ENCODE measurements at regions of chr5 and their contacts with region 1.

Region 1: DNA sequence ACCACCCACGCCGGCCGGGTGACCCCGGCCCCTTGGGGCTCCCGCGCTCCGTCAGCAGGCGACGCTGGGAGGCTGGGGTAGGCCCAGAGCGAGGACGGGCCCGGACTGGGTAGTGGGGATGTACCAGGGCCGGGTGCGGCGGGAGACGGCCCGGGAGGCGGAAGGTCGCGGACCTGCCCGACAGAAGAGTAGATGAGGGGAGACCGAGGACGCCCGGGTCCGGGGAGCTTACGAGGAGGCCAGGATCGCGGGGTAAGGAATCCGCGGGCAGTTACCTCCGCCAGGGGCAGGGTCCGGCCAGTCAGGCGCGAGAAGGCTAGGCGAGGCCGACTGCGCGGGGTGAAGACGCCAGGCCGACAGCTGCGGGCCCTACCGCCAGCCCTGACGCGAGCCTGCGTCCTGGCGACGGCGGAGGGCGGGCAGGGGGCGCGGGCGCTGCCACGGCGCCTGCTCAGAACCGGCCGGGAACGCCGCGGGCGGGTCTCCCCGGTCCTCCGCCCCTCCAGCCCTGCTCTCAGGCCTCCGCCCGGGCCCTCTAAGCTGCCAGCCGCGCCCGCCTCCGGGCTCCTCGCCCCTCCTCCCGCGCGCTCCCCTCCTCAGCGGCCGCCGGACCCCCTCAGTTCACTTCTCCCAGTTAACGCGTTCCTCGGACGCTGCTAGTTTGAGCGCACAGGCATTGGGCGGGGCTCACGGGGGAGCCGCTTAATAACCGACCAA is at the start of gene CPLANE1:
- DNase-seq: peak; percentile 89
- total RNA-seq, gene CPLANE1: 9.9 TPM

Region 2: GRCh38 chr5:37370864-37371726 is 122.0 kb after region 1 on chr5 and contains the start of gene NUP155:
- intact Hi-C with region 1: loop called (anchors 5 kb)
- DNase-seq: peak; percentile 97
- total RNA-seq, gene NUP155: 11.5 TPM